ENCODE measurements at regions of chrX and their contacts with region 1.

Region 1: DNA sequence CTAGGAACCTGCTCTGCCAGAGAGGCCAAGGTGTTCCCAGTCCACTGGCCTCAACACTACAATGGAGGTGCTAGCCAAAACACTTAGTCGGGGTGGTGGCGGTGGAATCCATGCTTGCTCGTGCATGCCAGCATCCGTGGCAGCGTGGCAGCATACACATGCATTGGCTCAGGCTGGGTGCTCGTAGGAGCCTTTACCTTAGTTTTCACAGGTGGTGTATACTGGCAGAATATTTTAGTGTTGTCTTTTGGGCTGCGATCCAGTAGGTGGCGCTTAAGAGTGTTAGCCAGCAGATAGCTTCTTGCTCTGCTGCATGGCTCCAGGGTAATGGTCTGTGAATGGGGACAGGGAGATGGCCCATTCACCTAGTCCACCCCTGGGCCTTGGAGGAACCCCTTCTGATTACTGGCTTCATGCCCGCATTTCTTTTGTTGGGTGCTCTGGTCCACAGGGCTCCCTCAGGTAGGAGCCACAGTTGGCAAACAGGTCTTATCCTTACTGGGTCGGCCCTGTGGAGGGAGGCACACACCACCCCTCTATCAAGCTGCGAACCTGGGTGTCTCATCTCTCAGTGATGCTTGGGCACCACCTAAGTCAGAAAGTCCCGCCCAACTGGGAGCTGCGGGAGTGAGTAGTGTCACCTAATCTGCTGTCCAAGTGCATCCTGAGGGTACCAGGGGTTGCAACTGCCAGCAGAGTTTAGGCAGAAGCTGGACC is 40.0 kb downstream of the RIPPLY1 start:
- DNase-seq: peak; percentile 24
- H3K4me3 ChIP-seq: no peak overlapping the region
- H3K27ac ChIP-seq: no peak overlapping the region
- H3K4me1 ChIP-seq: no peaks in the 10 kb centered on the region
- H3K27me3 ChIP-seq: peaks cover 20% of the 10 kb centered on the region; the same call in 1 of the 2 replicates
- CTCF ChIP-seq: peak; percentile 72
- EP300 ChIP-seq: no peak
- RAD21 ChIP-seq: no peak

Region 2: DNA sequence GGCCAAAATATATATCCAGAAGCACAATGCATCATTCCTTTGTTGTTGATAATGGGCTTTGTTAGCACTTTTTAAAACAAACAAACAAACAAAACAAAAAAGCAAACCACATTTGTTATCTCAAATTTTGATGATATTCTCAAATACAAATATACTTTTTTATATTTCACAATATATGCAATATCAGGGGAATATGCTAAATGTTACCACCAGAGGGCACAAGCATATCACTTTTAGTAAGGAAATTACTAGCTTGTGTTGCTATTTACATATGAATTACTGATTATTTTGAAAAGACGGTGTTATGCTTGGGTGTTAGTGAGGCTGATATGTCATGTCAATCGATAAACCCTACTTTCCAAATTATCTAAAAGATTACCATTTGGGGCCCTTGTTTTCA is 10.9 kb after region 1 on chrX:
- CTCF ChIA-PET with region 1: interaction called, 47 read pairs
- POLR2A ChIA-PET with region 1: no interaction called
- DNase-seq: peak; percentile 10
- H3K4me3 ChIP-seq: no peak overlapping the region
- H3K27ac ChIP-seq: no peak overlapping the region
- H3K4me1 ChIP-seq: no peaks in the 10 kb centered on the region
- H3K27me3 ChIP-seq: peaks cover 34% of the 10 kb centered on the region; the same call in 1 of the 2 replicates
- CTCF ChIP-seq: peak; percentile 84
- EP300 ChIP-seq: no peak
- RAD21 ChIP-seq: peak; percentile 62

Region 3: GRCh38 chrX:107589243-107589642 is 726.1 kb after region 1 on chrX:
- CTCF ChIA-PET with region 1: no interaction called
- POLR2A ChIA-PET with region 1: no interaction called
- DNase-seq: no peak
- H3K4me3 ChIP-seq: no peak overlapping the region
- H3K27ac ChIP-seq: no peak overlapping the region
- H3K4me1 ChIP-seq: no peaks in the 10 kb centered on the region
- H3K27me3 ChIP-seq: peaks cover 9% of the 10 kb centered on the region; the same call in 1 of the 2 replicates
- CTCF ChIP-seq: no peak
- EP300 ChIP-seq: no peak
- RAD21 ChIP-seq: no peak

Measured in SK-N-SH (cell line).